PC-9 (cell line): ENCODE measurements at regions of chr10 and their contacts with region 1.

Region 1: GRCh38 chr10:58952747-58953466 is 223.5 kb upstream of the PHYHIPL start:
- DNase-seq: peak in 1 of 2 experiments; percentile 15
- H3K4me3 ChIP-seq: no peak overlapping the region
- H3K27ac ChIP-seq: no peak overlapping the region
- H3K4me1 ChIP-seq: no peaks in the 10 kb centered on the region
- H3K27me3 ChIP-seq: no peaks in the 10 kb centered on the region
- CTCF ChIP-seq: peak; percentile 85

Region 2: GRCh38 chr10:58531084-58531695 is 421.7 kb before region 1 on chr10:
- CTCF ChIA-PET with region 1: no interaction called
- POLR2A ChIA-PET with region 1: no interaction called
- intact Hi-C with region 1: loop called (anchors 10 kb)
- DNase-seq: peak; percentile 52 to 53
- H3K4me3 ChIP-seq: no peak overlapping the region
- H3K27ac ChIP-seq: no peak overlapping the region
- H3K4me1 ChIP-seq: no peaks in the 10 kb centered on the region
- H3K27me3 ChIP-seq: no peaks in the 10 kb centered on the region
- CTCF ChIP-seq: peak; percentile 88

Region 3: DNA sequence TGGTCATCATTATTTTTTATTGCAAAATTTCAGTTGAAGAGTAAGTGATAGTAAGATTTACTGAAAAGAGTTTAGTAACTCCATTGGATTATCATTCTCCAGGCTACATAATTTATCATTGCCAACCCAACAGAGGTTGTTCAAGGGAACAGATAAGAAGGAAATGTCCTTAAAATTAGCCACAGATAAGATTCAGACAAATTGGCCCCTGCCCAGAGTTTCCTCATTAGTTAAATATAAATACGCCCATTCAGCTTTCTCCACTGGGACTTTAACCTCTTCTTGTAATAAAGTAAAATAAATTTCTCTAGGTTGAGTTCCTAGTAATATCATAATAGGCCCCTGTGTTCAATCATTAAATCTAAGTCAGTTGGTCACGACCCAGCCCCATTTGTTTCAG is 195.8 kb after region 1 on chr10:
- CTCF ChIA-PET with region 1: no interaction called
- POLR2A ChIA-PET with region 1: no interaction called
- intact Hi-C with region 1: no loop called
- DNase-seq: no peak
- H3K4me3 ChIP-seq: no peak overlapping the region
- H3K27ac ChIP-seq: no peak overlapping the region
- H3K4me1 ChIP-seq: no peaks in the 10 kb centered on the region
- H3K27me3 ChIP-seq: no peaks in the 10 kb centered on the region
- CTCF ChIP-seq: no peak

Region 4: GRCh38 chr10:59181668-59182067 is 228.8 kb after region 1 on chr10:
- CTCF ChIA-PET with region 1: interaction called, 4 read pairs
- POLR2A ChIA-PET with region 1: no interaction called
- intact Hi-C with region 1: loop called (anchors 1 kb)
- DNase-seq: no peak
- H3K4me3 ChIP-seq: no peak overlapping the region
- H3K27ac ChIP-seq: no peak overlapping the region
- H3K4me1 ChIP-seq: no peaks in the 10 kb centered on the region
- H3K27me3 ChIP-seq: no peaks in the 10 kb centered on the region
- CTCF ChIP-seq: peak; percentile 60

Region 5: DNA sequence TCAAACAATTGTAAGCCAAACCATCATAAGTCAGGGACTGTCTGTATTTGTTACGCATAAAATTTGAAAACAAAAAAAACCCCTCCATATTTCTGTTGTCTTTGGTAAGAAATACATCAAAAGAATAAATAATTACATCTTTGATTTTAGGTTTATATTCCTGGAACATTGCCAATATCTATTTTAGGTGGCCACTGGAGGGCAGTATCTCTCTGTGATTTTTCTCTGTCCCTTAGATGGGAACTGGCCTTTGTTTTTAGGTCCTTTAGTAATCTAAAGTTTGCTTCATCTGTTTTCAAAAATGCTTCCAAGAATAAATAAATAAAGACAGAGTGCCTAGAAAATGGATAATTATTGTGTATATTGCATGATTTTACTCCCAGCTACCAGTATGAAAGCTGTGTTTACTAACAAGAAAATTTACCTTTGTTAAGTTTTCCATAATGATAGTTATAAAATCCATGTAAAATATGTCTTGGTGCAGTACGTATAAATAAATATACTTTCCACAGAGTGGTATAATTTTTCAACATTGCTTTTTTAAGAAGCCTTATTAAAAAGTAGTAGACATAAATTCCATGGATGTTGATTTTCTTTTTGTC is 287.8 kb after region 1 on chr10:
- CTCF ChIA-PET with region 1: no interaction called
- POLR2A ChIA-PET with region 1: no interaction called
- intact Hi-C with region 1: loop called (anchors 2 kb)
- DNase-seq: peak in 1 of 2 experiments; percentile 4
- H3K4me3 ChIP-seq: no peak overlapping the region
- H3K27ac ChIP-seq: no peak overlapping the region
- H3K4me1 ChIP-seq: no peaks in the 10 kb centered on the region
- H3K27me3 ChIP-seq: no peaks in the 10 kb centered on the region
- CTCF ChIP-seq: peak; percentile 88